ENCODE measurements at regions of chrX and their contacts with region 1.

Region 1: GRCh38 chrX:63560601-63561218 is 209.6 kb upstream of the SPIN4 start:
- DNase-seq: peak; percentile 7 to 71 (median 63)
- ATAC-seq: peak; percentile 89
- H3K4me3 ChIP-seq: peak overlapping the region; percentile 87
- H3K4me3 Mint-ChIP-seq: peak overlapping the region; percentile 93 to 100 (median 96)
- H3K27ac ChIP-seq: peak overlapping the region; percentile 59
- H3K27ac Mint-ChIP-seq: peak overlapping the region; percentile 86 to 97 (median 92)
- H3K4me1 ChIP-seq: peaks cover 0 to 4% of the 10 kb centered on the region in 2 donors
- H3K4me1 Mint-ChIP-seq: peaks cover 3 to 34% (median 20%) of the 10 kb centered on the region in 7 donors
- H3K27me3 ChIP-seq: no peaks in the 10 kb centered on the region
- H3K27me3 Mint-ChIP-seq: no peaks in the 10 kb centered on the region

Region 2: DNA sequence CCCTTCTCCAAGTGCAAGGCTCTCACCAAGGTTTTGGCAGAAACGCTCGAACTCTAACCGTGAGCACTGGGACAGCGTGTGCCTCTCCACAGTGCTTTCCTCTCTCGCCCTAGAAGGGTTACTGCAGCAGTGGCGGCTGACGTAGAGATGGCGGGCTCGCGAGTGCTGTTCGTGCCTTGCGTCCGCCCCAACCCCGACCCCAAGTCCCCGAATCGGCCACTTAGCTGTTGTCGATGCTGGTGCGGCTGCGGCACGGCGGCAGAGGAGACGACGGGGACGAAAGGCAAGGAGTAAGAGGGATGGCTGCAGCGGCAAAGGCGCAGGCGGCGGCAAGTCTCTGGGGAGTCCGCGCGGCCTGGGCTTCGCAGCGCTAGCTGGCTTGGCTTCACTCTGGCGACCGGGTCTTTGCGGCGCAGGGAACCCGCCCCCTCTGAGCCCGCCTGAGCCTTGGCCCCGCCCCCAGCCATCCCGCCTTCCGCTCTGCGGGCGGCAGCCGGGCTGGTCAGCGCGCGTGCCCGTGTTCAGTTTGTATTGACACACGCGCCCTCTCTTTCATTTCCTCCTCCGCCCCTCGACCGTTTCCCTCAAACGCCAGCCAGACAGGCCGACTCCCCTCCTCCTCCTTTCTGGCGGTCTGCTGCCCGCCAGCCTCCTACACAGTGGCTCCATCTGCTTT is 209.6 kb before region 1 on chrX and contains the start of gene SPIN4:
- CTCF ChIA-PET with region 1: no interaction called
- POLR2A ChIA-PET with region 1: no interaction called
- intact Hi-C with region 1: loop called (anchors 2 to 5 kb)
- DNase-seq: peak; percentile 9 to 68 (median 18)
- ATAC-seq: peak; percentile 92
- H3K4me3 ChIP-seq: peak within 1 kb of the TSS; percentile 72
- H3K4me3 Mint-ChIP-seq: peak within 1 kb of the TSS; percentile 83 to 98 (median 89)
- H3K27ac ChIP-seq: peak within 1 kb of the TSS; percentile 48
- H3K27ac Mint-ChIP-seq: peak within 1 kb of the TSS in 8 of 9 donors; percentile 70 to 84 (median 81)
- H3K4me1 ChIP-seq: peaks cover 0 to 3% of the 10 kb centered on the region in 2 donors
- H3K4me1 Mint-ChIP-seq: peaks cover 4 to 35% (median 23%) of the 10 kb centered on the region in 7 donors
- H3K27me3 ChIP-seq: no peaks in the 10 kb centered on the region
- H3K27me3 Mint-ChIP-seq: no peaks in the 10 kb centered on the region
- total RNA-seq, gene SPIN4: 0.95 to 6.8 (median 1.9) TPM

Region 3: GRCh38 chrX:64205735-64206491 is 645.2 kb after region 1 on chrX:
- CTCF ChIA-PET with region 1: no interaction called
- POLR2A ChIA-PET with region 1: no interaction called
- intact Hi-C with region 1: loop called (anchors 1 to 2 kb)
- DNase-seq: peak; percentile 70 to 88 (median 86)
- ATAC-seq: peak; percentile 95
- H3K4me3 ChIP-seq: peak overlapping the region; percentile 71
- H3K4me3 Mint-ChIP-seq: peak overlapping the region; percentile 83 to 94 (median 90)
- H3K27ac ChIP-seq: peak overlapping the region; percentile 77
- H3K27ac Mint-ChIP-seq: peak overlapping the region; percentile 82 to 95 (median 93)
- H3K4me1 ChIP-seq: peaks cover 6 to 7% of the 10 kb centered on the region in 2 donors
- H3K4me1 Mint-ChIP-seq: peaks cover 9 to 25% (median 13%) of the 10 kb centered on the region in 7 donors
- H3K27me3 ChIP-seq: no peaks in the 10 kb centered on the region
- H3K27me3 Mint-ChIP-seq: no peaks in the 10 kb centered on the region

Region 4: DNA sequence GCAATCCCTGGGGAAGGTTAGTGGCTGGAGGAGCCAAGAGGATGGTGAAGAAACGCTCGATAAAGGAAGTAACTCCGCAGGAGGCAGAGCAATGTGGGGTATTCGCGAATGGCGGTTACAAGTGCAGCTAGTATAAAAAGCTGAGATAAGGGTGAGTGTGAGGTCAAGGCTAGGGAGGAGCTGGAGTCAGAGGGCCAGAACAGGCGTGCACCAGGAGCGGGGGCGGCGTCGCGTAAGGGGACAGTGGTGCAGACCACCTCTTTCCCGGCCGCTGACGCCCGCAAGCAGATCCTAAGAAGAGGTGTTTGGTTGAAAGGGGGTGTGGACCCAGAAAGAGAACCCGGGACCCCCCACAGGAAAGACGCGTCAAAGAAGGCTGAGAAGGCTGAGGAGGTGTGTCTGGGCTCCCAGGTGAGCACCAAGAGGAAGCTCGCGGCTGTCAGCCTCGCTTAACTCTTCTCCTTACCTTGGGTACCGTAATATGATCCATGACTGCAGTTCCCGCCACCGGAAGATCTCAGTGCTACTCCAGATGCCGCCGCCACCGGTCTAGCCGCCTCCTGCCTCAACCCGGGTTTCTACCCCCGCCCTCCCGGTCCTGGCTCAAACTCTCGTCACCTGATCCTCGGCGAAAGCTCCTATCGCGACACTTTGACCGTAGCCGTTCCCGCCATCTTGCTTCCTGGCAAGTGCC is 834.3 kb after region 1 on chrX and contains the start of gene MTMR8:
- CTCF ChIA-PET with region 1: no interaction called
- POLR2A ChIA-PET with region 1: interaction called, 3 read pairs
- intact Hi-C with region 1: loop called in 1 of 2 experiments (anchors 5 kb)
- DNase-seq: peak; percentile 58 to 83 (median 78)
- ATAC-seq: peak; percentile 94
- H3K4me3 ChIP-seq: peak within 1 kb of the TSS; percentile 66
- H3K4me3 Mint-ChIP-seq: peak within 1 kb of the TSS; percentile 89 to 98 (median 94)
- H3K27ac ChIP-seq: peak within 1 kb of the TSS; percentile 66
- H3K27ac Mint-ChIP-seq: peak within 1 kb of the TSS; percentile 83 to 94 (median 91)
- H3K4me1 ChIP-seq: no peaks in the 10 kb centered on the region
- H3K4me1 Mint-ChIP-seq: peaks cover 15 to 54% (median 45%) of the 10 kb centered on the region in 7 donors
- H3K27me3 ChIP-seq: no peaks in the 10 kb centered on the region
- H3K27me3 Mint-ChIP-seq: no peaks in the 10 kb centered on the region
- total RNA-seq, gene MTMR8: 4.7 to 9.4 (median 7.2) TPM

Region 5: GRCh38 chrX:65534450-65535292 is 1974.0 kb after region 1 on chrX and contains the start of gene LAS1L:
- CTCF ChIA-PET with region 1: no interaction called
- POLR2A ChIA-PET with region 1: no interaction called
- intact Hi-C with region 1: loop called in 1 of 2 experiments (anchors 5 kb)
- DNase-seq: peak; percentile 71 to 94 (median 90)
- ATAC-seq: peak; percentile 99
- H3K4me3 ChIP-seq: peak within 1 kb of the TSS; percentile 96
- H3K4me3 Mint-ChIP-seq: peak within 1 kb of the TSS; percentile 97 to 100 (median 100)
- H3K27ac ChIP-seq: peak within 1 kb of the TSS; percentile 75
- H3K27ac Mint-ChIP-seq: peak within 1 kb of the TSS; percentile 94 to 100 (median 98)
- H3K4me1 ChIP-seq: peaks cover 10 to 13% of the 10 kb centered on the region in 2 donors
- H3K4me1 Mint-ChIP-seq: peaks cover 5 to 28% (median 16%) of the 10 kb centered on the region in 7 donors
- H3K27me3 ChIP-seq: no peaks in the 10 kb centered on the region
- H3K27me3 Mint-ChIP-seq: no peaks in the 10 kb centered on the region
- total RNA-seq, gene LAS1L: 37.2 to 48.9 (median 44.9) TPM